ENCODE measurements at regions of chr3 and their contacts with region 1.

Region 1: DNA sequence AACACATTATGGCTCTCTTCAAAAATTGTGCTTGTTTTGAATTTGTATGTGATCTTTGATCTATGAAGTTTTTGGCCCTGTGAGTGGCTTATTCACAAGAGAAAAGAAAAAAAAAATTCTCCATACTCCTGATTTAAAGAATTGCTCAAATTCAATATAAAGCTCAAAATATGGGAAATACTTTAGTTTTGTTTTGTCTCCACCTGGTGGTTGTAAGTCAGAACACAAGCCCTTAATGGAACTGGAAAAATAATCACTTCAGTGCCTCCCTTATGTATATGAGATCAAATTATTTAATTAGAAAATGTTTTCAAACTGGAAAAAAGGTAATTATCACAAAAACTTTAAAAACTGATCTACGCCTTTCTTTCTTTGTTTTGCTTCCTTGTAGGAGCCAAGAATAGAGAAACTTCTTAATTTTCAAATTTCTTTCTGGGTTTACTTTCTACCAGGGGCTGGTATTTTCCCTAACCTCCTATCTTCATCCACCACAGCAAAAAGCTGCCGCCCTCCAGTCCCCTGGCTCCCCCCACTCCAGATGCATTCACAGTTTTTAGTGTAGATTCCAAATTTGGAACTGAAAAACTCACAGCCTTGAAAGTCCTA is 50.6 kb downstream of the SERP1 start:
- DNase-seq: peak; percentile 75
- H3K4me3 ChIP-seq: no peak overlapping the region
- H3K27ac ChIP-seq: no peak overlapping the region
- H3K4me1 ChIP-seq: peaks cover 9% of the 10 kb centered on the region
- H3K27me3 ChIP-seq: no peaks in the 10 kb centered on the region
- CTCF ChIP-seq: peak; percentile 36 to 42
- POLR2A ChIP-seq: no peak

Region 2: GRCh38 chr3:150183678-150184425 is 311.8 kb before region 1 on chr3:
- CTCF ChIA-PET with region 1: interaction called, 24 read pairs
- POLR2A ChIA-PET with region 1: no interaction called
- dilution Hi-C with region 1: no loop called
- intact Hi-C with region 1: no loop called
- DNase-seq: peak; percentile 80
- H3K4me3 ChIP-seq: peak overlapping the region; percentile 8 to 51 (median 31)
- H3K27ac ChIP-seq: peak overlapping the region; percentile 18
- H3K4me1 ChIP-seq: peaks cover 16% of the 10 kb centered on the region
- H3K27me3 ChIP-seq: peaks cover 0 to 6% of the 10 kb centered on the region in 2 experiments
- CTCF ChIP-seq: peak; percentile 63 to 65
- POLR2A ChIP-seq: no peak

Region 3: GRCh38 chr3:150232992-150233451 is 262.6 kb before region 1 on chr3:
- CTCF ChIA-PET with region 1: interaction called, 107 read pairs
- POLR2A ChIA-PET with region 1: no interaction called
- dilution Hi-C with region 1: no loop called
- intact Hi-C with region 1: no loop called
- DNase-seq: peak; percentile 95
- H3K4me3 ChIP-seq: no peak overlapping the region
- H3K27ac ChIP-seq: peak overlapping the region; percentile 76
- H3K4me1 ChIP-seq: peaks cover 33% of the 10 kb centered on the region
- H3K27me3 ChIP-seq: no peaks in the 10 kb centered on the region
- CTCF ChIP-seq: no peak
- POLR2A ChIP-seq: peak; percentile 21

Region 4: DNA sequence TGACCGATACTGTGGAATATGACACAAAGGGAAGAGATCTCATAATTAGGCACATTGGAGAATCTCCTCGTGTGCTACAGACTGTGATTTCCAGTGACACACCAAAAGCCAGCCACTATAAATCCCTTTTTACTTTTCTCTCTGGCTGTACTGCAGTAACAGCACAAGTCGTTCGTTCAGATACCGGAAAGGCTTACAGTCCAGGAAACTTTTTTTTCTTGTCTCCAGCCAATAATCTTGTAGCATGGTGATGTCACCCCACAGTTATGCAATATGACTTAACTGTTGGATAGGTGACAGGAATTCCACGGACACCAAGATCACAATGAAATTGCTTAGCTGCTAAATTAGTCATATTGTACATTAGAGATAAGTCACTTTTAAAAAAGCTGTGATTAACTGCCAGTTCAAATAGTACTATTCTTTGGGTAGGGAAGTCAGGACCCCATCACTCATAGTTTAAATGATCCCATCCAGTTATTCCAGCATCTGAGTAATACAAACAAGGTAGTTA is 123.9 kb before region 1 on chr3:
- CTCF ChIA-PET with region 1: interaction called, 18 read pairs
- POLR2A ChIA-PET with region 1: no interaction called
- dilution Hi-C with region 1: no loop called
- intact Hi-C with region 1: loop called (anchors 1 kb)
- DNase-seq: peak; percentile 100
- H3K4me3 ChIP-seq: peak overlapping the region; percentile 7 to 91 (median 19)
- H3K27ac ChIP-seq: peak overlapping the region; percentile 94
- H3K4me1 ChIP-seq: peaks cover 39% of the 10 kb centered on the region
- H3K27me3 ChIP-seq: no peaks in the 10 kb centered on the region
- CTCF ChIP-seq: no peak
- POLR2A ChIP-seq: peak; percentile 86

Region 5: GRCh38 chr3:150449169-150449721 is 46.4 kb before region 1 on chr3:
- CTCF ChIA-PET with region 1: interaction called, 4 read pairs
- POLR2A ChIA-PET with region 1: no interaction called
- dilution Hi-C with region 1: no loop called
- intact Hi-C with region 1: loop called (anchors 2 kb)
- DNase-seq: peak; percentile 87
- H3K4me3 ChIP-seq: peak overlapping the region in 1 of 3 experiments; percentile 30
- H3K27ac ChIP-seq: peak overlapping the region; percentile 84
- H3K4me1 ChIP-seq: peaks cover 54% of the 10 kb centered on the region
- H3K27me3 ChIP-seq: no peaks in the 10 kb centered on the region
- CTCF ChIP-seq: no peak
- POLR2A ChIP-seq: no peak